Tibial artery (tissue), 4 donors: ENCODE measurements at regions of chr7 and their contacts with region 1.

Region 1: GRCh38 chr7:107754642-107755041 is 10.7 kb downstream of the CBLL1 start:
- DNase-seq: no peak
- H3K4me3 ChIP-seq: no peak overlapping the region
- H3K27ac ChIP-seq: no peak overlapping the region
- H3K4me1 ChIP-seq: no peaks in the 10 kb centered on the region
- H3K27me3 ChIP-seq: no peaks in the 10 kb centered on the region
- CTCF ChIP-seq: no peak

Region 2: GRCh38 chr7:107816011-107816566 is 61.4 kb after region 1 on chr7:
- intact Hi-C with region 1: no loop called
- DNase-seq: no peak
- H3K4me3 ChIP-seq: no peak overlapping the region
- H3K27ac ChIP-seq: no peak overlapping the region
- H3K4me1 ChIP-seq: no peaks in the 10 kb centered on the region
- H3K27me3 ChIP-seq: no peaks in the 10 kb centered on the region
- CTCF ChIP-seq: no peak

Region 3: GRCh38 chr7:107860981-107861652 is 106.5 kb after region 1 on chr7:
- intact Hi-C with region 1: loop called (anchors 10 kb)
- DNase-seq: no peak
- H3K4me3 ChIP-seq: no peak overlapping the region
- H3K27ac ChIP-seq: no peak overlapping the region
- H3K4me1 ChIP-seq: no peaks in the 10 kb centered on the region
- H3K27me3 ChIP-seq: no peaks in the 10 kb centered on the region
- CTCF ChIP-seq: no peak